ENCODE measurements at regions of chr2 and their contacts with region 1.

Region 1: DNA sequence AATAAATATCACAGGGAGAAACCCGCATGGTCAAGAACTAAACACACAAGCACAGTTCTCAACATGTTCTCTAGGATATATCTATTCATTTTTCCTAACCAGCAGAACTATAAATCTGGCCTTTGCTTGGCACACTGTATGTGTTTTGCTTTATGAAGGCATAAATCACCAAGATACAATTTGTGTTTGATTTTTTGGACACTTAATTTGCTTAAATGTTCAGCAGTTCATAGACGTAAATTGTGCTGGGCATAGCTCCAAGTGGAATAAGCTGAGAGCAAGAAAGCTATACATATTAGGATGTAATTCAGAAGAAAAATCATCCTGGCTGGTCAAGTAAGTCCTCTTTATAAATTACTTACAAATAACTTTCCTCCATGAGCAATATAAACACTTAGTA is 341.5 kb upstream of the ATP5MC3 start:
- H3K4me3 Mint-ChIP-seq: no peak overlapping the region
- H3K27ac Mint-ChIP-seq: no peak overlapping the region
- H3K4me1 Mint-ChIP-seq: no peaks in the 10 kb centered on the region
- H3K27me3 Mint-ChIP-seq: no peaks in the 10 kb centered on the region

Region 2: DNA sequence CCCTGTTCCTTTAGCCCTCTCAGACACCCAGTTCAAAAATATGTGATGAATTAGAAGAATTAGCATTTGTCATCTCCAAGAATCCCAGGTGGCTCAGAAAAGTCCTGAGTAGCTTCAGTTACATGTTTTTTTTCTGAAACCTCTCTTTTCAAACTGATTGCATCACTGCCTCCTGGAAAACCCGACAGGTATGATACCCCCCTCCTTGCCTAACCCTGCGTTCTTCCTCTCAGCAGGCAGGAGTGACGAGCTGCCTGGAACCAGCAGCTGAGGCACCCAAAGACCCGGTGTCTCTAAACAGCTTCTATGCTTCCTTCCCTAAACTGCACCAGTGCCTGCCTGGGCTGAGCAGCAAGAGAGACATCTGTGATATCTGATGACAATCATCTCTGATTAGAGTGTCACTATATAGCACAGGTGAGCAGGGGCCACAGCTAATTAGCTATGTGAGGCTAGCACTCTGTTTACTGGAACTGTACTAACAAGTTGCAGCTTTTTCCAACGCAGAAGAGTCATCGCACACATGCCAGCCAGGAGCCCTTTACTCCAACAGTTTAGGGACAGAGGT is 34.9 kb after region 1 on chr2:
- intact Hi-C with region 1: no loop called
- H3K4me3 Mint-ChIP-seq: no peak overlapping the region
- H3K27ac Mint-ChIP-seq: no peak overlapping the region
- H3K4me1 Mint-ChIP-seq: peaks cover 10% of the 10 kb centered on the region
- H3K27me3 Mint-ChIP-seq: peaks cover 3% of the 10 kb centered on the region

Region 3: GRCh38 chr2:176385838-176386237 is 862.8 kb after region 1 on chr2:
- intact Hi-C with region 1: loop called (anchors 10 kb)
- H3K4me3 Mint-ChIP-seq: no peak overlapping the region
- H3K27ac Mint-ChIP-seq: no peak overlapping the region
- H3K4me1 Mint-ChIP-seq: no peaks in the 10 kb centered on the region
- H3K27me3 Mint-ChIP-seq: peaks cover 5% of the 10 kb centered on the region

Measured in dendritic cell treated with granulocyte-macrophage colony-stimulating factor and Interleukin-4, amounts not matched to agents 40 ng/mL and 50 ng/mL, for 4 days (primary cell).